ENCODE measurements at regions of chr6 and their contacts with region 1.

Region 1: DNA sequence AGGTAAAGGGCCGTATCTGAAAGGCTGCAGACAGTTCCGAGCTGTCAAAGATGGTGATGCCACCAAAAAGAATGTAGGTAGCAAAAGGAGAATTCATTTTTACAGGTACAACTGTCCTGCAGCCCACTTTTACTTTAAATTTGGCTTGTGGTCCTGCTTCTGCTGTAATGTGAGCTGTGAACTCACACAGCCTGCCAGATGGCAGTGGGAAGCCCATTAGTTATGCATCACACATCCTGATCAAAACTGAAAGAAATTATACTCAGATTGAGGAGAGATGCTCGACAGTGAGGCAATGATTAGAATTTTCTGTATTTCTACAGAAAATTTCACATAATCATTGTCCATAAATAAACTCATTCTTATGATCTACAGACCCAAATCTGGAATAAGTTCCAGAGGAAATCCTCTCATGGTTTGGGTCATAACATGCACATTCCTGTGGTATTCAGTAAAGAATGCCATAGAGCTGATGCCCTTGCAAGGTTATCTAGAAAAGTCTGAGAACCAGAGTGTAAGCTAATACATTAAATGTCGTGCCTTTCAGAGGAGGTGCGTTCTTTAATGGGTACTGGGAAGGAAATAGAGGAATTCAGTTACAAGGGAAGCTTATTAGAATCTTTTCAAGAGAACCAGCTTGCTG is 23.9 kb upstream of the E2F3 start:
- DNase-seq: no peak
- ATAC-seq: no peak
- H3K4me3 ChIP-seq: no peak overlapping the region
- H3K27ac ChIP-seq: no peak overlapping the region
- H3K4me1 ChIP-seq: no peaks in the 10 kb centered on the region
- H3K27me3 ChIP-seq: no peaks in the 10 kb centered on the region
- CTCF ChIP-seq: no peak
- POLR2A ChIP-seq: no peak

Region 2: GRCh38 chr6:19964115-19964514 is 413.6 kb before region 1 on chr6:
- in situ Hi-C with region 1: no loop called
- intact Hi-C with region 1: no loop called
- DNase-seq: no peak
- ATAC-seq: no peak
- H3K4me3 ChIP-seq: no peak overlapping the region
- H3K27ac ChIP-seq: no peak overlapping the region
- H3K4me1 ChIP-seq: no peaks in the 10 kb centered on the region
- H3K27me3 ChIP-seq: no peaks in the 10 kb centered on the region
- CTCF ChIP-seq: no peak
- POLR2A ChIP-seq: no peak

Region 3: GRCh38 chr6:20455251-20455940 is 77.7 kb after region 1 on chr6:
- in situ Hi-C with region 1: no loop called
- intact Hi-C with region 1: loop called (anchors 2 kb)
- DNase-seq: no peak
- ATAC-seq: peak; percentile 18 to 19
- H3K4me3 ChIP-seq: no peak overlapping the region
- H3K27ac ChIP-seq: no peak overlapping the region
- H3K4me1 ChIP-seq: peaks cover 0 to 9% of the 10 kb centered on the region in 2 donors
- H3K27me3 ChIP-seq: no peaks in the 10 kb centered on the region
- CTCF ChIP-seq: no peak
- POLR2A ChIP-seq: no peak

Measured in gastrocnemius medialis (tissue), 4 donors.